ENCODE measurements at regions of chr18 and their contacts with region 1.

Region 1: GRCh38 chr18:42053188-42053781 is 98.3 kb downstream of the PIK3C3 start:
- DNase-seq: peak; percentile 36
- H3K4me3 ChIP-seq: no peak overlapping the region; a peak in 1 of 4 replicates
- H3K27ac ChIP-seq: peak overlapping the region in 1 of 2 experiments; percentile 53; a peak in 2 of 4 replicates
- H3K4me1 ChIP-seq: peaks cover 0 to 5% of the 10 kb centered on the region in 2 experiments; a peak in 2 of 4 replicates
- H3K27me3 ChIP-seq: no peaks in the 10 kb centered on the region
- CTCF ChIP-seq: peak; percentile 95
- EP300 ChIP-seq: no peak
- RAD21 ChIP-seq: peak; percentile 77

Region 2: DNA sequence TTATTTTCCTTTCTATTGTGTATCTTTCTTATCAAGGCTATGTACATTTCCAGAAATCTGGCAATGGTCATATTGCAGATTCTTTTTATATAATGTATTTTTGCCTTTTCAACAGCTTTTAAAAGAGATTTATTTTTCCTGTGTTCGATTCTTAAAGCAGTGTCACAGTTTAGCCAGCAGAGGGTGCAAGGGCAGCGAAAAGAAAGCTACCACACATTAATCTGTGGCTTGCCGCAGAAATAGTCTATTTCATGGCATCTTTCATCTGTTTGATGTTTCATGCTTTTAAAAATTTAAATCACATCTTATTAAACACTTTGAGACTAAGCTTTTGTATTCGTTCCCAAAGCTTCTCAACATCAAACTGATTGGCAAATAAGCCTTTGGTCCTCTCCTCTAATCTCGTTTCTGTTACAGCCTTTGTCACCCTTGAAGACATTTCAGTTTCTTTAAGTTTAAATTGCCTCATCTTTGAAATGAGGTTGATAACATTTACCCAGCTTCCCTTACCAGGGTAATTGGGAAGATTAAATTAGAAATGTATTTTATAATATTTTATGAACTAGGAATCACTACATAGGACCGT is 24.9 kb before region 1 on chr18:
- CTCF ChIA-PET with region 1: interaction called, 23 read pairs
- POLR2A ChIA-PET with region 1: no interaction called
- DNase-seq: peak; percentile 37
- H3K4me3 ChIP-seq: no peak overlapping the region; a peak in 1 of 4 replicates
- H3K27ac ChIP-seq: no peak overlapping the region
- H3K4me1 ChIP-seq: peaks cover 0 to 2% of the 10 kb centered on the region in 2 experiments; a peak in 2 of 4 replicates
- H3K27me3 ChIP-seq: no peaks in the 10 kb centered on the region
- CTCF ChIP-seq: peak; percentile 94
- EP300 ChIP-seq: no peak
- RAD21 ChIP-seq: peak; percentile 52

Region 3: GRCh38 chr18:42064109-42064508 is 10.8 kb after region 1 on chr18:
- CTCF ChIA-PET with region 1: interaction called, 19 read pairs
- POLR2A ChIA-PET with region 1: no interaction called
- DNase-seq: no peak
- H3K4me3 ChIP-seq: no peak overlapping the region
- H3K27ac ChIP-seq: peak overlapping the region in 1 of 2 experiments; percentile 37; a peak in 1 of 4 replicates
- H3K4me1 ChIP-seq: peaks cover 0 to 5% of the 10 kb centered on the region in 2 experiments; a peak in 1 of 4 replicates
- H3K27me3 ChIP-seq: no peaks in the 10 kb centered on the region
- CTCF ChIP-seq: no peak
- EP300 ChIP-seq: no peak
- RAD21 ChIP-seq: no peak

Region 4: DNA sequence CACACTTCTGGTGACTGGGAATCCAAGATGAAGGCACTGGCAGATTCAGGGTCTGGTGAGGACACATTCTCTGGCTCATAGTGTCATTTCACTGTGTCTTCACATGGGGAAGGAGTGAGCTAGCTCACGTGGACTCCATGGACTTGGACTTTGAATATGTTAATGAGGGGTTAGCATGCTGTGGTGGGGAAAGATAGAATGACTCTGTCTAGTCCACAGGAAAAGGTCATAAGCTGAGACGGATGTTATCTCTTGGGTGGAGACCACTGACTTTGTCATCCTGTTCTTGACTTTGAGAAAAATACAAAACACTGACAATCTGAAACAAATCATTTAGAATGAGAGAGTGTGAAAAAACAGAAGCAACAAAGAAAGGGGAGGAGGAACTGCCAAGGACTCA is 47.6 kb after region 1 on chr18:
- CTCF ChIA-PET with region 1: interaction called, 12 read pairs
- POLR2A ChIA-PET with region 1: no interaction called
- DNase-seq: no peak
- H3K4me3 ChIP-seq: no peak overlapping the region
- H3K27ac ChIP-seq: no peak overlapping the region
- H3K4me1 ChIP-seq: no peaks in the 10 kb centered on the region
- H3K27me3 ChIP-seq: no peaks in the 10 kb centered on the region
- CTCF ChIP-seq: no peak
- EP300 ChIP-seq: no peak
- RAD21 ChIP-seq: no peak

Region 5: GRCh38 chr18:43271593-43272432 is 1218.5 kb after region 1 on chr18:
- CTCF ChIA-PET with region 1: interaction called, 14 read pairs
- POLR2A ChIA-PET with region 1: no interaction called
- DNase-seq: peak; percentile 10
- H3K4me3 ChIP-seq: no peak overlapping the region
- H3K27ac ChIP-seq: no peak overlapping the region
- H3K4me1 ChIP-seq: peaks cover 0 to 6% of the 10 kb centered on the region in 2 experiments; a peak in 1 of 4 replicates
- H3K27me3 ChIP-seq: no peaks in the 10 kb centered on the region
- CTCF ChIP-seq: peak; percentile 74
- EP300 ChIP-seq: no peak
- RAD21 ChIP-seq: peak; percentile 89

Region 6: GRCh38 chr18:43571078-43571689 is 1517.9 kb after region 1 on chr18:
- CTCF ChIA-PET with region 1: interaction called, 12 read pairs
- POLR2A ChIA-PET with region 1: no interaction called
- DNase-seq: peak; percentile 40
- H3K4me3 ChIP-seq: peak overlapping the region in 1 of 2 experiments; percentile 4; a peak in 1 of 4 replicates
- H3K27ac ChIP-seq: no peak overlapping the region
- H3K4me1 ChIP-seq: peaks cover 0 to 6% of the 10 kb centered on the region in 2 experiments; a peak in 2 of 4 replicates
- H3K27me3 ChIP-seq: no peaks in the 10 kb centered on the region
- CTCF ChIP-seq: peak; percentile 88
- EP300 ChIP-seq: no peak
- RAD21 ChIP-seq: peak; percentile 91

Measured in SK-N-SH (cell line).